ENCODE measurements at regions of chr13 and their contacts with region 1.

Region 1: GRCh38 chr13:73865027-73865426 is 269.2 kb downstream of the KLF12 start:
- DNase-seq: no peak
- ATAC-seq: no peak
- H3K4me3 ChIP-seq: no peak overlapping the region
- H3K4me3 Mint-ChIP-seq: no peak overlapping the region
- H3K27ac ChIP-seq: no peak overlapping the region
- H3K27ac Mint-ChIP-seq: no peak overlapping the region
- H3K4me1 ChIP-seq: no peaks in the 10 kb centered on the region
- H3K4me1 Mint-ChIP-seq: peaks cover 10% of the 10 kb centered on the region
- H3K27me3 ChIP-seq: no peaks in the 10 kb centered on the region
- H3K27me3 Mint-ChIP-seq: no peaks in the 10 kb centered on the region
- CTCF ChIP-seq: no peak

Region 2: DNA sequence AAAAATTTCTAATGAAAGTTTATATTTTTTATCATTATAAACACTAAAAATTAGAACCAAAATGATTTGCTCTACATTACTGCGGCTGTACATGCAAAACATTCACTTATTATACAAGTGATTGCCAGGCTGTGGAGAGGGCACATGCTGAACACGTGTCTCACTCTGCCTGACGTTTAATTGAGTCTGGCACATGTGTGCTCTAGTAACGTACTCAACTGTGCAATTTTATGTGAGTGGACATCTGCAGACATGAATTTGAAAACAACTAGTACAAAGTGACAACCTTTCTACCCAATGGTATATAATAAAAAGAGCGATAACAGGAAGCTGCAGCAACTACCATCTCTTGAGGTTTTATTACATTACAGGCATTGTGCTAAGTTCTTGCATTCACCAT is 72.2 kb before region 1 on chr13:
- CTCF ChIA-PET with region 1: no interaction called
- POLR2A ChIA-PET with region 1: no interaction called
- intact Hi-C with region 1: no loop called
- DNase-seq: no peak
- ATAC-seq: no peak
- H3K4me3 ChIP-seq: no peak overlapping the region
- H3K4me3 Mint-ChIP-seq: no peak overlapping the region
- H3K27ac ChIP-seq: no peak overlapping the region
- H3K27ac Mint-ChIP-seq: no peak overlapping the region
- H3K4me1 ChIP-seq: no peaks in the 10 kb centered on the region
- H3K4me1 Mint-ChIP-seq: no peaks in the 10 kb centered on the region
- H3K27me3 ChIP-seq: no peaks in the 10 kb centered on the region
- H3K27me3 Mint-ChIP-seq: no peaks in the 10 kb centered on the region
- CTCF ChIP-seq: no peak

Region 3: DNA sequence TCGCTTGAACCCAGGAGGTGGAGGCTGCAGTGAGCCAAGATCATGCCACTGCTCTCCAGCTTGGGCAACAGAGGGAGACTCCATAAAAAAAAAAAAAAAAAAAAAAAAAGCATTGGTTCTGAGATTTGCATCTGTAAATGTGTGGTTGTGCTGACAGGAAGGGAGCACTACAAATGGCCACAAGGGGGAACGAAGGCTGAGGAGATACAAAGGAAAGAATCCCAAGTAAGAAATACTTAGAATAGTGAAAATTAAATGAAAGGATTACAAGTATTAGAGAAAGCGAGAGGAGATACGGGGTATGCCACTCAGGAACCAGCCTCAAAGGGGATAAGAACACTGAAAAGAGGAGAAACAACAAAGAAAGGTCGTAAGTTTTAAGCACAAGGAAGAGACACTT is 15.7 kb before region 1 on chr13:
- CTCF ChIA-PET with region 1: no interaction called
- POLR2A ChIA-PET with region 1: no interaction called
- intact Hi-C with region 1: loop called (anchors 2 kb)
- DNase-seq: peak; percentile 47
- ATAC-seq: peak; percentile 56
- H3K4me3 ChIP-seq: no peak overlapping the region
- H3K4me3 Mint-ChIP-seq: no peak overlapping the region
- H3K27ac ChIP-seq: no peak overlapping the region
- H3K27ac Mint-ChIP-seq: no peak overlapping the region
- H3K4me1 ChIP-seq: peaks cover 5 to 7% of the 10 kb centered on the region in 2 donors
- H3K4me1 Mint-ChIP-seq: peaks cover 23% of the 10 kb centered on the region
- H3K27me3 ChIP-seq: no peaks in the 10 kb centered on the region
- H3K27me3 Mint-ChIP-seq: no peaks in the 10 kb centered on the region
- CTCF ChIP-seq: peak; percentile 42

Region 4: GRCh38 chr13:73902296-73902695 is 37.3 kb after region 1 on chr13:
- CTCF ChIA-PET with region 1: no interaction called
- POLR2A ChIA-PET with region 1: no interaction called
- intact Hi-C with region 1: loop called (anchors 5 kb)
- DNase-seq: no peak
- ATAC-seq: no peak
- H3K4me3 ChIP-seq: no peak overlapping the region
- H3K4me3 Mint-ChIP-seq: peak overlapping the region; percentile 9
- H3K27ac ChIP-seq: no peak overlapping the region
- H3K27ac Mint-ChIP-seq: no peak overlapping the region
- H3K4me1 ChIP-seq: peaks cover 7 to 21% of the 10 kb centered on the region in 2 donors
- H3K4me1 Mint-ChIP-seq: peaks cover 47% of the 10 kb centered on the region
- H3K27me3 ChIP-seq: no peaks in the 10 kb centered on the region
- H3K27me3 Mint-ChIP-seq: no peaks in the 10 kb centered on the region
- CTCF ChIP-seq: no peak